ENCODE measurements at regions of chr11 and their contacts with region 1.

Region 1: DNA sequence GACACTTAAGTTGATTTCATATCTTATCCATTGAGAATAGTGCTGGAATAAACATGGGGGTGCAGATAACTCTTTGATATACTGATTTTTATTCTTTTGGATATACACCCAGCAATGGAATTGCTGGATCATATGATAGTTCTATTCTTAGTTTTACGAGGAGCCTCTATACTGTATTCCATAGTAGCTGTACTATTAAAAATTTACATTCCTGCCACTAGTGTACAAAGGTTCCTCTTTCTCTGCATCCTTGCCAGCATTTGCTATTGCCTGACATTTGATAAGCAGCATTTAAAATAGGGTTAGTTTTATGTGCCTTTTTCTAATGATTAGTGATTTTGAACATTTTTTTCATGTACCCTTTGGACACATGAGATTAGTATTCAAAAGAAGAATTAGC is 554.2 kb downstream of the JRKL start:
- DNase-seq: no peak
- ATAC-seq: peak; percentile 55
- H3K4me3 ChIP-seq: no peak overlapping the region
- H3K27ac ChIP-seq: no peak overlapping the region
- H3K4me1 ChIP-seq: no peaks in the 10 kb centered on the region
- H3K27me3 ChIP-seq: no peaks in the 10 kb centered on the region; a peak in 1 of 5 replicates
- CTCF ChIP-seq: no peak
- EP300 ChIP-seq: no peak
- POLR2A ChIP-seq: no peak
- RAD21 ChIP-seq: no peak

Region 2: DNA sequence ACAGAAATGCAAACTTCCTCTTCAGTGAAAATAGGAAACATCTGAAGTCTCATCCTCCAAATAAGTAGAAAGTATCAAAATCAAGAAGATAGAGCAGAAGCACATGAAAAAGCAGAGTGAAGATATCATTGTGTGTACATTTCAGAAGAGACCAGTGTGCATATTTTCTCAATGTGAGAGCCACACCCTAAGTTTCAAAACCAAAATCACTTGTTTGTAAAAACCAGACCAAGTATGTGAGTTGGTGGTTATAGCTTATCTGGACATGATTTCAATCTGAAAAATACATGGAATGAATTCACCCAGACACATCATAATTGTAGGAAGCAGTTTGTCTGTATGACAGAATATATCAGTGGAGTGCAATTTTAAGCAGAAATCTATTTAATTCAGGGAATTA is 18.1 kb before region 1 on chr11:
- CTCF ChIA-PET with region 1: no interaction called
- POLR2A ChIA-PET with region 1: no interaction called
- in situ Hi-C with region 1: no loop called
- intact Hi-C with region 1: loop called (anchors 1 kb)
- DNase-seq: no peak
- ATAC-seq: no peak
- H3K4me3 ChIP-seq: no peak overlapping the region
- H3K27ac ChIP-seq: no peak overlapping the region
- H3K4me1 ChIP-seq: no peaks in the 10 kb centered on the region
- H3K27me3 ChIP-seq: no peaks in the 10 kb centered on the region
- CTCF ChIP-seq: no peak
- EP300 ChIP-seq: no peak
- POLR2A ChIP-seq: no peak
- RAD21 ChIP-seq: no peak

Measured in HepG2 (cell line).